ENCODE measurements at regions of chr17 and their contacts with region 1.

Region 1: GRCh38 chr17:3738562-3739295 is 15.0 kb downstream of the HASPIN start:
- H3K4me3 ChIP-seq: no peak overlapping the region
- H3K27ac ChIP-seq: no peak overlapping the region
- H3K4me1 ChIP-seq: no peaks in the 10 kb centered on the region
- CTCF ChIP-seq: no peak

Region 2: GRCh38 chr17:3683054-3683511 is 55.6 kb before region 1 on chr17:
- CTCF ChIA-PET with region 1: interaction called, 19 read pairs
- POLR2A ChIA-PET with region 1: no interaction called
- H3K4me3 ChIP-seq: no peak overlapping the region
- H3K27ac ChIP-seq: no peak overlapping the region
- H3K4me1 ChIP-seq: no peaks in the 10 kb centered on the region
- CTCF ChIP-seq: peak; percentile 88

Region 3: DNA sequence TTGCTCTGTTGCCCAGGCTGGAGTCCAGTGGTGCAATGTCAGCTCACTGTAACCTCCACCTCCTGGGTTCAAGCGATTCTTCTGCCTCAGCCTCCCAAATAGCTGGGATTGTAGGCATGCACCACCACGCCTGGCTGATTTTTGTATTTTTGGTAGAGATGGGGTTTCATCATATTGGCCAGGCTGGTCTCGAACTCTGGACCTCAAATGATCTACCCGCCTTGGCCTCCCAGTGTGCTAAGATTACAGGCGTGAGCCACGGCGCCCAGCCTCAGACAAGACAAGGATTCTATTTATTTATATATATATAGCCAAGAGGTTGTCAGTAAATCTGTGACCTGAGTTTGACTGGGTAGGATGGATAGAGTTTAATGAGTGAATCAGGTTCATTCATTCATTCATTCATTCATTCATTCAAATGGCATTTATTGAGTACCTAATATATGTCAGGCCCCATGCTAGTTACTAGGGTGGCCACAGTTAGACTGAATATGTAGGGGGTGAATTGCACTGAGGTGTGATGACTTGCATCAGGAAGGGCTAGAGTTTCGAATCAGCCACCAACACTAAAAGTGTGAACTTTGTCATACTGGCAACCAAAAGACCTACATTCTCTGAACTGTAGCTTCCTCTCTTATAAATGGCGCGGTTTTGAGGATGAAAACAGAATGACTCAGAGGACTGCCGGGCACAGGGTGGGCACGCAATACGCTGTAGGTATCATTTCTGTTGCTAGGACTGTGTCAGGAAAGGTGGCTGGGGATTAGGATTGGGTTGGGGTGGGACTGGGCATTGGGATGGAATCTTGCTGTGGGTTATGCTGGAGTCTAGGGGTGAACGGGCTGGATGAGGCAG is 24.4 kb after region 1 on chr17:
- CTCF ChIA-PET with region 1: interaction called, 23 read pairs
- POLR2A ChIA-PET with region 1: no interaction called
- H3K4me3 ChIP-seq: no peak overlapping the region
- H3K27ac ChIP-seq: no peak overlapping the region
- H3K4me1 ChIP-seq: no peaks in the 10 kb centered on the region
- CTCF ChIP-seq: no peak

Region 4: DNA sequence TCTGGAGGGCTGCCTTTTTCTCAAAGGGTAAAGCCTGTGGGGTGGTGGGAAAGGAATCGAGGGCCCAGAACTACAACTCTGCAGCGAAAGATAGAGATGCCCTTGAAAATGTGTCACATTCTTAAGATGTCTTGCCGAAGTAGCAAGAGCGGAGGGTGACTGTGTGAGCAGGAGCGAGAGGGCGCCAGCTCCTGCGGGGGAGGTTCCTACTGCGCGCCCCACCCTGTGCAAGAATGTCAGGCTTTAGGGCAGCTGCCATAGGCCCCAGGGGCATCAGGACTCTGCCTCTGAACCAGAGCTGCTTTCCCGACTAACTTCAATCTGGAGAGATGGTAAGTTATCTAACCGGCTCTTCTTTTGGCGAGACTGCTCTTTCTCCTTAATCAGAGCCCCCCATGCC is 74.0 kb after region 1 on chr17:
- CTCF ChIA-PET with region 1: interaction called, 23 read pairs
- POLR2A ChIA-PET with region 1: interaction called, 5 read pairs
- H3K4me3 ChIP-seq: no peak overlapping the region
- H3K27ac ChIP-seq: no peak overlapping the region
- H3K4me1 ChIP-seq: no peaks in the 10 kb centered on the region
- CTCF ChIP-seq: no peak

Region 5: DNA sequence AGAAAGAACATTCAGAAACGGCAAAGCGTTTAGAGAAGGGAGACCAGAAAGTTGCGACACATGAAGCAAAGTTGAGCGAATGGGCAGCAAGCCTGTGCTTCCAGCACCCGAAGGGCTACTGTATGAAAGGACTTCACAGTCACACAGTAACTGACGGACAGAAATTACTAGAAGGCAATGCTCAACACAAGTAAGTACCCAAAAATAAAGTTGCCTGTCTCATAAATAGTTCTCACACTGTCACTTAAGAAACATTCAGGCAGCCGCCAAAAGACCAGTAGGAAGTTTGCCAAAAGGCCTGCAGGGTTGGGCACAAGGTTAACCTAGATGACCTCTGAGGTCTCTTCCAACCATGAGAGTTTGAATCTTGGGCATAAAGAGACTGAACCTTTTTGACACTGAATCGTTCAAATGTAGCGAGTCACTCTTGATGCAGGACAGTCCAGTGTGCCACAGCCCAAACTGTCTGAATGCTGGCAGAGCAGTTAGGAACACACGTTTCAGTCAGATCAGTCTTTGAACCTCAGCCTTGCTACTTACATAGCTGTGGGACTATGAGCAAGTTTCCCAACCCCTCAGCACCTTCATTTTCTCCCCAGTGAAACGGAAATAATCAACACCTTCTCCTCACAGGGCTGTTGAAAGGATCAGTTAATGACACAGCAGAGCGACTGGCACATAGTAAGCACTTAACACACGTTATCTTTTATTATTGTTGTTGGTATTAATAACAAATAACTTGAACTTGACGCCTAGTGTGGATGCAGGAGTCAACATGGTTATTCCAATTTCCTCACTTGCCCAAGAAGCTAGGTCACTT is 96.9 kb after region 1 on chr17:
- CTCF ChIA-PET with region 1: interaction called, 172 read pairs
- POLR2A ChIA-PET with region 1: no interaction called
- H3K4me3 ChIP-seq: no peak overlapping the region
- H3K27ac ChIP-seq: no peak overlapping the region
- H3K4me1 ChIP-seq: no peaks in the 10 kb centered on the region
- CTCF ChIP-seq: no peak

Region 6: GRCh38 chr17:3907483-3908216 is 168.9 kb after region 1 on chr17:
- CTCF ChIA-PET with region 1: interaction called, 13 read pairs
- POLR2A ChIA-PET with region 1: no interaction called
- H3K4me3 ChIP-seq: no peak overlapping the region
- H3K27ac ChIP-seq: no peak overlapping the region
- H3K4me1 ChIP-seq: no peaks in the 10 kb centered on the region
- CTCF ChIP-seq: peak; percentile 68; the same call in 1 of the 2 replicates

Region 7: GRCh38 chr17:3965118-3965803 is 226.5 kb after region 1 on chr17:
- CTCF ChIA-PET with region 1: no interaction called
- POLR2A ChIA-PET with region 1: no interaction called
- H3K4me3 ChIP-seq: no peak overlapping the region
- H3K27ac ChIP-seq: no peak overlapping the region
- H3K4me1 ChIP-seq: peaks cover 6% of the 10 kb centered on the region; the same call in 1 of the 2 replicates
- CTCF ChIP-seq: no peak